ENCODE measurements at regions of chr10 and their contacts with region 1.

Region 1: DNA sequence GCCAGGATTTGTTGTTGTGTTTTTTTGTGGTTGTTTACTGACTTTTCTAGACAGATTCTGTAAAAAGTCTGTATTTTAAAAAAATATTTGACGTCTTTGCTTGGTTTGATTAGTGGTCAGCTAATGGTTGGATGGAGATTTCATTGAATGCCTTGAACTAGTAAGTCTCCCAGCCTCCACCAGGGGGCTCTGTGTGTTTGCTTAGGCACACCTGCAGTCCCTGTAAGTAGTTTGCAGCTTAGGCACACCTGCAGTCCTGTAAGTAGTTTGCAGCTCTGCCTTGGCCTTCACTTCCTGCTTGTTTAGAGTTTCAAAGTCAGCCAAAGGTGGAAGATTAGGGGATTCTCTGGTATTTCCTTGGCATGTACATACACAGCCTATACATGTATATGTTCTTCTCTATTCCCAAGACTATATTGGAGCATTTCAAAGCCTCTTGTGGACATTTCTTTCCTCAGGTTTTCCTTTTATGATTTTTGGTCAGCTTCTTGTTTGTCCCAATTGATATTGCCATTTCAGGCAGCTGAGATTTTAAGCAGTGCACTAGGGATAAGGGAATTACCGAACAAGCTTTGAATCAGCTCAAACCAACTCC is 101.6 kb downstream of the CCSER2 start:
- DNase-seq: peak; percentile 79
- H3K4me3 ChIP-seq: no peak overlapping the region
- H3K4me3 Mint-ChIP-seq: no peak overlapping the region
- H3K27ac Mint-ChIP-seq: no peak overlapping the region
- H3K4me1 ChIP-seq: no peaks in the 10 kb centered on the region
- H3K4me1 Mint-ChIP-seq: peaks cover 8% of the 10 kb centered on the region
- H3K27me3 ChIP-seq: no peaks in the 10 kb centered on the region
- H3K27me3 Mint-ChIP-seq: no peaks in the 10 kb centered on the region
- CTCF ChIP-seq: peak; percentile 56 to 75

Region 2: GRCh38 chr10:84375011-84375410 is 55.0 kb before region 1 on chr10:
- CTCF ChIA-PET with region 1: no interaction called
- POLR2A ChIA-PET with region 1: no interaction called
- intact Hi-C with region 1: loop called (anchors 2 kb)
- DNase-seq: peak in 1 of 2 experiments; percentile 64
- H3K4me3 ChIP-seq: no peak overlapping the region
- H3K4me3 Mint-ChIP-seq: no peak overlapping the region
- H3K27ac Mint-ChIP-seq: no peak overlapping the region
- H3K4me1 ChIP-seq: peaks cover 4% of the 10 kb centered on the region; the same call in 1 of the 2 replicates
- H3K4me1 Mint-ChIP-seq: no peaks in the 10 kb centered on the region
- H3K27me3 ChIP-seq: no peaks in the 10 kb centered on the region
- H3K27me3 Mint-ChIP-seq: no peaks in the 10 kb centered on the region
- CTCF ChIP-seq: peak; percentile 61 to 75

Measured in Caco-2 (cell line).